CD8-positive, alpha-beta T cell (primary cell): ENCODE measurements at regions of chr1 and their contacts with region 1.

Region 1: DNA sequence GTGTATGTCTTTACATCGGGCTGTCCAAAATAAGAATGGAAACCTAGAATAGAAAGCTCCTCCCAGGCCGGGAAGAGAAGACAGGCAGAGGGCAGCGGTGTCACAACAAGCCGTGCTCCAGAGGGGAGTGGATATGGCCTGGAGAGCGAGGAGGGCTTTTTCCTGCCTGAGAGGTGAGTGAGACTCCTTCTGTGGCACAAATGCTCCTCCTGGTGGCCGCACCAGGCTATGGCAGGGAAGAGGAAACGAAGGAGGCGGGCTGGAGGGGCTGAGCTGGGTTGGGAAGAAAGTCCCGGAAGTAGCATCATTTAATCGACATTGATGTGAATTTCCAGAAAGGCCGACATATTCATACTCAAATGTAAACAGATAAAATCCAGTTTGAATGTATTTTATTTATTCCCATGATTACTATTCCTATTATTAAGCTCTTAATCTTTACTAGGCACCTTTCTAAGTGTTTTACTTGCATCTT is 54.7 kb downstream of the MEF2D start:
- DNase-seq: peak; percentile 51 to 87 (median 80)
- ATAC-seq: peak; percentile 93
- H3K4me3 ChIP-seq: no peak overlapping the region
- H3K4me3 Mint-ChIP-seq: no peak overlapping the region
- H3K27ac ChIP-seq: no peak overlapping the region
- H3K27ac Mint-ChIP-seq: no peak overlapping the region
- H3K4me1 ChIP-seq: peaks cover 4% of the 10 kb centered on the region
- H3K4me1 Mint-ChIP-seq: peaks cover 5% of the 10 kb centered on the region
- H3K27me3 ChIP-seq: peaks cover 13 to 20% of the 10 kb centered on the region in 2 experiments
- H3K27me3 Mint-ChIP-seq: peaks cover 56% of the 10 kb centered on the region
- CTCF ChIP-seq: peak; percentile 94

Region 2: DNA sequence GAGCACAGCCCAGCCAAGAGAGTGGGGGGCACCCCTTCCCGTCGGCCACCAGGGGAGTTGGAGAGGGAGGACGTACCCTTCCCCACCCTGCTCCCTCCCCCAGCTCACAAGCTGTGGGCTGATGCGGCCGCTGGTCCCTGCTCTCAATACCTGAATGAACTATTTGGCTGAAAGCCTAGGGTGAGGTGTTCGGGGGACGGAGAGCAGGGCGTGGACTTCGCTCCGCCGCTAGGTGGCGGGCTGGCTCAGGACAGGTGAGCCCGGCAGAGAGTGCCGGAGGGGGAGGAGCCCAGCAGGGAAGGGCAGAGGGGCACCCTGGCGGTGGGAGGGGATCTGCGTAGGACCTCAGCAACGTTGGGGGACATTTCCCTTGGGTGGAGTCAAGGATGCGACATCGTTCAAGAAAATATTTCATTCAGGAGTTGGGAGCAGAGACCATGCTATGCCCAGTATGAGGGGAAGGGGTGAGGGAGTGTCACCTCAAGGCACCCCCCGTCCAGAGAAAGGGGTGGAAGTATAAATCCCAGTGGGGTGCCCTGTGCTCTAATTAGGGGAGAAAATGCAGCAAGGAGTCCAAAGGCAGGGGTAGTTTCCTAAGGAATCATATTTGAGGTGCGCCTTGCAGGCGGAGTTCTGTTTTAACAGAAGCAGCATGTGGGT is 88.8 kb before region 1 on chr1:
- CTCF ChIA-PET with region 1: interaction called, 20 read pairs
- POLR2A ChIA-PET with region 1: no interaction called
- intact Hi-C with region 1: loop called in 1 of 2 experiments (anchors 1 kb)
- DNase-seq: peak; percentile 15 to 73 (median 67)
- ATAC-seq: peak; percentile 99
- H3K4me3 ChIP-seq: no peak overlapping the region
- H3K4me3 Mint-ChIP-seq: no peak overlapping the region
- H3K27ac ChIP-seq: no peak overlapping the region
- H3K27ac Mint-ChIP-seq: no peak overlapping the region
- H3K4me1 ChIP-seq: peaks cover 3% of the 10 kb centered on the region
- H3K4me1 Mint-ChIP-seq: peaks cover 7% of the 10 kb centered on the region
- H3K27me3 ChIP-seq: peaks cover 0 to 6% of the 10 kb centered on the region in 2 experiments
- H3K27me3 Mint-ChIP-seq: peaks cover 16% of the 10 kb centered on the region
- CTCF ChIP-seq: peak; percentile 78

Region 3: GRCh38 chr1:156388174-156389137 is 57.4 kb before region 1 on chr1:
- CTCF ChIA-PET with region 1: interaction called, 372 read pairs
- POLR2A ChIA-PET with region 1: interaction called, 20 read pairs
- intact Hi-C with region 1: loop called (anchors 1 kb)
- DNase-seq: no peak
- ATAC-seq: no peak
- H3K4me3 ChIP-seq: no peak overlapping the region
- H3K4me3 Mint-ChIP-seq: no peak overlapping the region
- H3K27ac ChIP-seq: no peak overlapping the region
- H3K27ac Mint-ChIP-seq: no peak overlapping the region
- H3K4me1 ChIP-seq: peaks cover 6% of the 10 kb centered on the region
- H3K4me1 Mint-ChIP-seq: peaks cover 7% of the 10 kb centered on the region
- H3K27me3 ChIP-seq: peaks cover 5 to 6% of the 10 kb centered on the region in 2 experiments
- H3K27me3 Mint-ChIP-seq: peaks cover 28% of the 10 kb centered on the region
- CTCF ChIP-seq: no peak

Region 4: GRCh38 chr1:156429313-156430060 is 16.3 kb before region 1 on chr1:
- CTCF ChIA-PET with region 1: interaction called, 37 read pairs
- POLR2A ChIA-PET with region 1: no interaction called
- intact Hi-C with region 1: no loop called
- DNase-seq: no peak
- ATAC-seq: no peak
- H3K4me3 ChIP-seq: no peak overlapping the region
- H3K4me3 Mint-ChIP-seq: no peak overlapping the region
- H3K27ac ChIP-seq: no peak overlapping the region
- H3K27ac Mint-ChIP-seq: no peak overlapping the region
- H3K4me1 ChIP-seq: no peaks in the 10 kb centered on the region
- H3K4me1 Mint-ChIP-seq: peaks cover 3% of the 10 kb centered on the region
- H3K27me3 ChIP-seq: peaks cover 28 to 38% of the 10 kb centered on the region in 2 experiments
- H3K27me3 Mint-ChIP-seq: peaks cover 80% of the 10 kb centered on the region
- CTCF ChIP-seq: no peak

Region 5: DNA sequence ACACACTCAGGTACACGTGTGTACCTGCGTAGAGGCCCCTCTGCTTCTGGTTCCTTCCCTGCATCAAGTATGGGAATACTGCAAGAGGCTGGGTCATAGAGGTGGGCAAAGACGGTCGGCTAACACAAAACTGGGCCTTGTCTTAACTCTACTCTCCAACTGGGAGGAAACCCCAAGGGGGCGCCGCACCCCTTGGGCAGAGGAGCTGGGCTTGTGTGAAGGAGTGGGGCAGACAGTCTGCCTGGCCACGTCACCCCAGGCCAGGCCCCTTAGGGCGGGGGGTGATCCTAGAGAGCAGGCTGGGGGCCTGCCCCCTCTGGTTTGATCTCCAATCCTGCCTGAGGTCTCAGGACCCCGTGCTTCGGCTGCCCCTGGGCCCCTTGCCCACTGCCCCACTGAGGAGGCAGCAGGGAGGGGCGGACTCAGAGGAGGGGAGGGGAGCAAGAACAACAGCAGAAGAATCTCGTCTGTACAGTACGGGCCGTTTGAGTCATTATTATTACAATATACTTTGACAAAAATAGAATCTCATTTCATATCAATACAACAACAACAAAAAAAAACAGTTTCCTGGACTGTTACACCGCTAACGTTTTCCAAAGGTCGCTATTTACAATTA is 20.0 kb after region 1 on chr1:
- CTCF ChIA-PET with region 1: interaction called, 10 read pairs
- POLR2A ChIA-PET with region 1: no interaction called
- intact Hi-C with region 1: no loop called
- DNase-seq: no peak
- ATAC-seq: no peak
- H3K4me3 ChIP-seq: no peak overlapping the region
- H3K4me3 Mint-ChIP-seq: no peak overlapping the region
- H3K27ac ChIP-seq: no peak overlapping the region
- H3K27ac Mint-ChIP-seq: peak overlapping the region; percentile 28
- H3K4me1 ChIP-seq: peaks cover 6% of the 10 kb centered on the region
- H3K4me1 Mint-ChIP-seq: peaks cover 25% of the 10 kb centered on the region
- H3K27me3 ChIP-seq: no peaks in the 10 kb centered on the region
- H3K27me3 Mint-ChIP-seq: no peaks in the 10 kb centered on the region
- CTCF ChIP-seq: no peak

Region 6: DNA sequence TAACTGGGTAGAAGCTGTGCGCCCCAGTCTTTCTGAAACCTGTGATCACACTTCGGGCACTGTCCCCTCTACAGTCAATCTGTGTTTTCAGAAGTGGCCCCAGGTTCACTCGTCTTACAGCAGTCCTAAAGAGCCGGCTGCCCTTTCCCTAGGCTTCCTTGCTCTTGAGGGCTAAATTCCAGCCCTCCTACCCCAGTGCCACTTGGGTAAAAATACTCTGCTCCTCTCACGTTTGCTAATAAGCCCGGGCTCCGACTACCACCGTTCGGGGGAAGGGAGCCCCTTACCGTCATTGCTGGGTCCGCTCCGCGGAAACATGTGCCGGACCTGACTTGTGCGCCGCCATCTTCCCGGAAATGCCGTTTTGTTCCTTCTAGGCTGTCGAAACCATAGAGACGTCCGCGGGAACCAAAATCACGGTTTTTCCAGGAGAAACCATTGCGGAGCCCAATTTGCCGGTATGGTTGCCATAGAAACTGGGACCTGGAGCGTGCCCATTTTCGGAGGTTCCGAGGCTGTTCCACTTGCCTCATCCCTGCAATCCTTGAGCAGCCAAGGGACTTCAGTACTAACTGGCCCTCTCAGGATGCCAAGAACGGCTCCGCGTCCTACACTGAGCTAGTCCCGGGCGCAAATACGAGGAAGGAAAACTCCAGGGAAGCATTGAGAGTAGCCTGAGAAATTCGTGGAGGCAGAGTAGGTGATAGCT is 155.4 kb after region 1 on chr1 and contains the start of gene GPATCH4:
- CTCF ChIA-PET with region 1: interaction called, 16 read pairs
- POLR2A ChIA-PET with region 1: no interaction called
- intact Hi-C with region 1: no loop called
- DNase-seq: peak in 8 of 9 experiments; percentile 61 to 86 (median 72)
- ATAC-seq: peak; percentile 80
- H3K4me3 ChIP-seq: peak within 1 kb of the TSS; percentile 65 to 70
- H3K4me3 Mint-ChIP-seq: peak within 1 kb of the TSS; percentile 98
- H3K27ac ChIP-seq: peak within 1 kb of the TSS; percentile 57 to 80
- H3K27ac Mint-ChIP-seq: peak within 1 kb of the TSS; percentile 98
- H3K4me1 ChIP-seq: peaks cover 24% of the 10 kb centered on the region
- H3K4me1 Mint-ChIP-seq: peaks cover 34% of the 10 kb centered on the region
- H3K27me3 ChIP-seq: no peaks in the 10 kb centered on the region
- H3K27me3 Mint-ChIP-seq: no peaks in the 10 kb centered on the region
- CTCF ChIP-seq: no peak
- total RNA-seq, gene GPATCH4: 46.4 to 46.7 TPM